IMR-90 (cell line): ENCODE measurements at regions of chr5 and their contacts with region 1.

Region 1: DNA sequence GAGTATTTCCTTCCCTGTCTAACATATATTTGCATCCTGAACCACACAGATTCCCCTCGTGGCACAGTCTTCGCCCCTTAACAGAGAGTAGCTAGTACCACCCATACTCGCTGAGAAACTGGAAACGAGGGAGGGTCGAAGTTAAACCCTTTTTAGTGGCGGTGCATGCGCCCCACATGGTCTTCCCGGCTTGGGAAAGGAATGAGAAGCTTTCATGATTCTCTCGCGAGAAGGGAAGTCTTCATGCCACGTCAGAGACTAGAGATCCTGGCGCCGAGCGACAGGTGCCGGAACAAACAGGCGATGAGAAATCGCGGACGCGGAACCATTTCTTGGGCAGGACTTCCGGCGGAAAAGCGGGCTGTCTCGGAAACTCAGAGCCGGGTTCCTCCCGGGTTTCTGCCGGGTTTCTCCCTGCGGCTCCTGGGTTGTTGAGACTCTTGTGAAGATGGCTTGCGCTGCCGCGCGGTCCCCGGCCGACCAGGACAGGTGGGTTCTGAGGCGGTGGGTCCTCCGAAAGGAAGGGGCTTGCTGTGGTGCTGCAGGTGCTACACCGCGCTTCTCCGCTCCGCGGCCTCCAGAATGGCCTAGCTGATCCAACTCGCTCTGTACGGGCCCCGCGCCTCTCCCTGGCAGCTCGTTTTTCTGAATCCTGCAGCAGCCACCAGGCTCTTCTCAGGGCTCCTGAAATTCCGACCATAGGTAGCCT is at the start of gene SRP19:
- DNase-seq: peak; percentile 98
- ATAC-seq: peak; percentile 92
- H3K4me3 ChIP-seq: peak within 1 kb of the TSS; percentile 91
- H3K27ac ChIP-seq: peak within 1 kb of the TSS; percentile 78
- H3K4me1 ChIP-seq: peaks cover 2% of the 10 kb centered on the region; the same call in 1 of the 2 replicates
- H3K27me3 ChIP-seq: no peaks in the 10 kb centered on the region
- CTCF ChIP-seq: no peak
- POLR2A ChIP-seq: peak; percentile 85
- RAD21 ChIP-seq: no peak
- total RNA-seq, gene SRP19: 10.0 and 51.4 TPM in 2 replicates

Region 2: GRCh38 chr5:112707187-112708102 is 153.6 kb before region 1 on chr5:
- CTCF ChIA-PET with region 1: no interaction called
- POLR2A ChIA-PET with region 1: no interaction called
- dilution Hi-C with region 1: no loop called
- in situ Hi-C with region 1: no loop called
- intact Hi-C with region 1: loop called (anchors 10 kb)
- DNase-seq: peak; percentile 98
- ATAC-seq: peak; percentile 96
- H3K4me3 ChIP-seq: peak overlapping the region; percentile 87
- H3K27ac ChIP-seq: peak overlapping the region; percentile 94
- H3K4me1 ChIP-seq: peaks cover 4% of the 10 kb centered on the region; the same call in 1 of the 2 replicates
- H3K27me3 ChIP-seq: no peaks in the 10 kb centered on the region
- CTCF ChIP-seq: no peak
- POLR2A ChIP-seq: peak; percentile 67; the same call in 1 of the 2 replicates
- RAD21 ChIP-seq: no peak

Region 3: DNA sequence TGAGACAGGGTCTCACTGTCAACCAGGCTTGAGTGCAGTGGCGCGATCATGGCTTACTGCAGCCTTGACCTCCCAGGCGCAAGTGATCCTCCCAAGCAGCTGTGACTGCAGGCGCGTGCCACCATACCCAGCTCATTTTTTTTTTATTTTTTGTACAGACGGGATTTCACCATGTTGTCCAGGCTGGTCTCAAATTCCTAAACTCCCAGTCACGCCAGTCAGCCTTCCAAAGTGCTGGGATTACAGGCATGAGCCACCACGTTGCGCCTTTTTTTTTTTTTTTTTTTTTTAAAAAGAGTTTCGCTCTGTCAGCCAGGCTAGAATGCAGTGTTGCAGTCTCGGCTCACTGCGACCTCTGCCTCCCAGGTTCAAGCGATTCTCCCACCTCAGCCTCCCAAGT is 27.1 kb before region 1 on chr5:
- CTCF ChIA-PET with region 1: no interaction called
- POLR2A ChIA-PET with region 1: no interaction called
- dilution Hi-C with region 1: no loop called
- in situ Hi-C with region 1: no loop called
- intact Hi-C with region 1: loop called (anchors 1 kb)
- DNase-seq: no peak
- ATAC-seq: no peak
- H3K4me3 ChIP-seq: no peak overlapping the region
- H3K27ac ChIP-seq: no peak overlapping the region
- H3K4me1 ChIP-seq: no peaks in the 10 kb centered on the region
- H3K27me3 ChIP-seq: no peaks in the 10 kb centered on the region
- CTCF ChIP-seq: no peak
- POLR2A ChIP-seq: no peak
- RAD21 ChIP-seq: no peak

Region 4: DNA sequence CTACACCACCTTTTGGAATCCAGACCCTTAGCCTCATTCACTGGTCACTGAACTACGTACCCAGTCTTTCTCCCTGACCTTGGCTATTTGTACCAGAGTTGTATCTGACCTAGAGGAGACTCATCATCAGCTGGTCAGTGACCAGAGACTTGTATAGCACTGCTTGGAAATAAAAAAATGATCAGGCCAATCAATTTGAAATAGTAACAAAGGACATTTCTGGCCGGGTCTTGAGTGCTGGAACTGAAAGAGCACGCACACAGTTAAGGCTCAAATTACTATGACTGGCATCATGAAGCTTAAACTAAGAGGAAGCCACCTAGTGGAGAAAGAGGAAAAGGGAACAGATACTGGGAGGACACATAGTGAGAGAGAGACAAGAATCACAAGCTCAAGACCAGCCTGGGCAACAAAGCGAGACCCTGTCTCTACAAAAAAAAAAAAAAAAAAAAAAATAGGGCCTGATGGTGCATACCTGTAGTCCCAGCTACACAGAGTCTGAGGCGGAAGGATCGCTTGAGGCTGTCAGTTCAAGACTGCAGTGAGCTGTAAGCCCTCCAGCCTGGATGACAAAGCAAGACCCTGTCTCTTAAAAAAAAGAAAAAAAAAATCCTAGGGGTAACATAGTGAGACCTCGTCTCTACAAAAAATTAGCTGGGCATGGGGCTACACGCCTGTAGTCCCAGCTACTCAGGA is 12.8 kb before region 1 on chr5:
- CTCF ChIA-PET with region 1: interaction called, 11 read pairs
- POLR2A ChIA-PET with region 1: no interaction called
- dilution Hi-C with region 1: no loop called
- in situ Hi-C with region 1: no loop called
- intact Hi-C with region 1: no loop called
- DNase-seq: peak; percentile 78
- ATAC-seq: peak; percentile 97
- H3K4me3 ChIP-seq: no peak overlapping the region; the same call in 1 of the 2 replicates
- H3K27ac ChIP-seq: no peak overlapping the region
- H3K4me1 ChIP-seq: no peaks in the 10 kb centered on the region
- H3K27me3 ChIP-seq: no peaks in the 10 kb centered on the region
- CTCF ChIP-seq: peak; percentile 67
- POLR2A ChIP-seq: no peak
- RAD21 ChIP-seq: peak; percentile 48; the same call in 1 of the 2 replicates